Posterior vena cava (tissue), 2 donors: ENCODE measurements at regions of chr6 and their contacts with region 1.

Region 1: GRCh38 chr6:128358244-128358776 is 162.1 kb downstream of the PTPRK start:
- DNase-seq: no peak

Region 2: GRCh38 chr6:126396131-126396530 is 1962.2 kb before region 1 on chr6:
- intact Hi-C with region 1: no loop called
- DNase-seq: no peak

Region 3: GRCh38 chr6:127100510-127101140 is 1257.7 kb before region 1 on chr6:
- intact Hi-C with region 1: no loop called
- DNase-seq: no peak

Region 4: GRCh38 chr6:128204621-128205020 is 153.7 kb before region 1 on chr6:
- intact Hi-C with region 1: no loop called
- DNase-seq: no peak

Region 5: GRCh38 chr6:128336436-128337095 is 21.7 kb before region 1 on chr6:
- intact Hi-C with region 1: loop called in 1 of 2 experiments (anchors 1 kb)
- DNase-seq: no peak